ENCODE measurements at regions of chr11 and their contacts with region 1.

Region 1: DNA sequence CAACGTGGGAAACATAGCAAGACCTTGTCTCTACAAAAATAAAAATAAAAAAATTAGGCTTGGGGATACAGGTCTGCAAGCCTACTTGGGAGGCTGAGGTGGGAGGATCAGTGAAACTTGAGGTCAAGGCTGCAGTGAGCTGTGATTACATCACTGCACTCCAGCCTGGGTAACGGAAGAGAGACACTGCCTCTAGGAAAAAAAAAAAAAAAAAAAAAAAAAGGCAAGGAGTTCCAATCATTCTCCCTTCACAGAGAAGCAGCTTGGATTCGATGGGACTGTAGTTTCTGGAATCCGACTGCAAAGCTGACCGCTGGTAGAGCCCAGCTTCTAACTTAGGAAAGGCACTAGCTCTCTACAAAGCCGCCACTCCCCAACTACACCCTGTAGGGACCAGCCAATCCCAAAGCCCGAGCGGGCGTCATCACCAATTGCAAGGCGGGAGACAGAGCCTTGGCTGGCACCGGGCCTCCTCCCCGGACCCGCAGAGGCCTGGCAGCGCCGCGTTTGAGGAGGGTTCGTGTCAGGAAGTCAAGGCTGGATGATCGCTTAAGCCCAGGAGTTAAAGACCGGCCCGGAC is 699 bp upstream of the DDB2 start:
- DNase-seq: peak; percentile 94
- H3K4me3 Mint-ChIP-seq: peak overlapping the region; percentile 100
- H3K27ac Mint-ChIP-seq: peak overlapping the region; percentile 100
- H3K4me1 Mint-ChIP-seq: peaks cover 27% of the 10 kb centered on the region
- H3K27me3 Mint-ChIP-seq: no peaks in the 10 kb centered on the region

Region 2: DNA sequence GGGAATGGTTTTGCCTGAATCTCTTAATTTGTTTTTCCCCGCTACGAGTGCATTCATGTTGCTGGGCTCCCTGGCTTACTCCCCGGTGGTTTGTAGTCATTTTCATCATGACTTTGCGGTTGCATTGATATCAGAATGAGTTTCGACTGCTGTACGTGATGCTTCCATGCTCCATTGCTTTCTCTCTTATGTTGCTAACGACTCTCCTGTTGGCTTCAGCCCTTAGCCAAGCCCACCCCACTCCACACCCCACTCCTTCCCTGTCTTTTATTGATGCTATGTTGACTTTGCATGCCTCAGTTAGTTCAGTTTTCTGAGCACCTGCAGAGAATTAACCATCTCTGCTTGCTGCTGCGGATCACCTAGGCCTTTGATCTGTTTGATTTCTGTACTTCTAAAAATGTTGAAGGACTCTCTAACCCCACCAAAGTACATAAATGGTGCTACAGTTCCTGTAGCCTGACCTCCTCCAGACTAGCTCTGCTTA is 102.7 kb before region 1 on chr11:
- CTCF ChIA-PET with region 1: no interaction called
- POLR2A ChIA-PET with region 1: no interaction called
- DNase-seq: no peak
- H3K4me3 Mint-ChIP-seq: no peak overlapping the region
- H3K27ac Mint-ChIP-seq: no peak overlapping the region
- H3K4me1 Mint-ChIP-seq: no peaks in the 10 kb centered on the region
- H3K27me3 Mint-ChIP-seq: no peaks in the 10 kb centered on the region

Region 3: DNA sequence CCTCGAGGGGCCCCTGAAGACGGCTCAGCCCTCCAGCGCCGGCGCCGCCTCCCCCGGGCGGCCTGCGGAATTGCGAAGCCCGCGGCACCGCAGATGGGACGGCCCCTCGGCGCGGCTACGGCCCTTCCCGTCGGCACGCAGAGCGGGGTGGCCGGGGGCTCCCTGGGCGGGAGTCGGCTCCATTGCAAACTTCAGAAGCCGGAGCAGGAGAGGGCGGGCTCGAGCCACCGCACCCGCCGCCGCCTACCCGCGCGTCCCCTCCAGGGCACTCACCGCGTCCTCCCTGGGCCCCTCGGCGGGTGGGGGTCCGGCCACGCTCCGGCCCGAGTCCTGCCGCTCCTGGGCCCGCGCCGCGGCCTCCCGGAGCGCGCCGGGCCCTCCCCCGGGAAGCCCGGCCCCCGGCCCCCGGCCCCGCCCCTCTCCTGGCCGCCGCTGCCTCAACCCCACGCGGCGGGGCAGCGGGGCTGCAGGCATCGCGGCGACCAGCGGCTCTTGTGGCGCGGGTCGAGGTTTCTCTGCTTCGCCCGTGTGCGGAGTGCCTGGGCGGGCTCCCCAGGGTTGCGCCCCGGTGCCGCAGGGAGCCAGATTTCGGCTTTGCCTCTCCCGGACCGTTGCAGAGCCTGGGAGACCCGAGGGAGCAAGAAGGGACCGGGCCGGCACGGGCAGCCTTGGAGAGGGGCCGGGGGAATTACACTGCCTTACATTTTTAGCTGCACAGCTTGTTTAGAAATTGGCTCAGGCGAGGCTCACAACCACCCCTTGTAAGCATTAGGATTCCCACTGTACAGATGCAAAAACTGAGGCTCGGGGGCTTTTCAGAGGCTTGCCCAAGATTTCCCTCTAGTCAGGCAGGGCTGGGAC is 27.8 kb before region 1 on chr11 and contains the start of gene PACSIN3:
- CTCF ChIA-PET with region 1: interaction called, 11 read pairs
- POLR2A ChIA-PET with region 1: interaction called, 5 read pairs
- DNase-seq: peak; percentile 32
- H3K4me3 Mint-ChIP-seq: peak within 1 kb of the TSS; percentile 63
- H3K27ac Mint-ChIP-seq: no peak within 1 kb of the TSS
- H3K4me1 Mint-ChIP-seq: peaks cover 13% of the 10 kb centered on the region
- H3K27me3 Mint-ChIP-seq: peaks cover 37% of the 10 kb centered on the region
- total RNA-seq, gene PACSIN3: 1.8 to 2.2 TPM

Measured in activated CD4-positive, alpha-beta T cell treated with anti-CD3 and anti-CD28 coated beads, Interleukin-2, amount 10 ng/mL, durations not matched to agents 7 days and 5 days (primary cell).